ENCODE measurements at regions of chr19 and their contacts with region 1.

Region 1: DNA sequence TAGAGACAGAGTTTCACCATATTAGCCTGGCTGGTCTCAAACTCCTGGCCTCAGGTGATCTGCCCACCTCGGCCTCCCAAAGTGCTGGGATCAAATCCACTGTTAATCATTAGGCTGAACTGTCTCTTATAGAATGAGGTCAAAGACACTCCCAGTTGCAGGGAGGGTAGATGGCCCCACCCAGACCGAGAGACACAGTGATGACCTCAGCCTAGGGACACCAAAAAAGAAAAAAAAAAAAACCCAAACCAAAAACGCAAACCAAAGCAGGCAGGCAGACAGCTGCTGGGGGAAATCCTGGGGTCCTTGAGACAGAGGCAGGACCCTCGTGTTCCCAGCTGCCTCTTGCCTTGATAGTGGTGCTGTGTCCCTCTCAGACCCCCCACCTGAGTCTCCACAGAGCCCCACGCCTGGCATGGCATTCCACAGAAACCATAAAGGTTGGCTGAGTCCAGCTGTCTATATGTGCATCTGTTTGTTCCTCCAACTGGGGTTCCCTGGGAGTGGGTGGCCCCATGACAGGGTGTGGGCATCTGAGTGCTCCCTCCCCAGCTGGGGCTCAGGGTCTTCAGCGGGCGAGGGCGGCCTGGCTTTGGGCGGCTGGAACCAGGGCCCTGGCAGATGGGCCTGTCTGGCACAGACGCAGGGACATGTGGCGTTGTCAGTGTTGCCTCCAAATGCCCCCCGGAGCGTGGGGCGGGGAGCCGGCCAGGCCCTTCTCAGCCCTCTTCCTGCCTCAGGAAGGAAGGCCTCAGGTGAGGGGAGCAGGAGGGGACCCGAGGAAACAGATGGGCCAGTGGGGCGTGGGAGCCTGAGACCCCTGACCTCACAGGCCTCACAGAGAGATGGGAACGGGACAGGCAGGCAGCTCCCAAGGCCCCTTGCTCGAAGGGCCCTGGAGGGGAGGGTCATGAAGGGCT is 5.2 kb downstream of the DAND5 start:
- DNase-seq: no peak
- ATAC-seq: no peak
- H3K4me3 Mint-ChIP-seq: no peak overlapping the region
- H3K27ac Mint-ChIP-seq: no peak overlapping the region
- H3K4me1 Mint-ChIP-seq: peaks cover 8% of the 10 kb centered on the region
- H3K27me3 Mint-ChIP-seq: peaks cover 7% of the 10 kb centered on the region

Region 2: DNA sequence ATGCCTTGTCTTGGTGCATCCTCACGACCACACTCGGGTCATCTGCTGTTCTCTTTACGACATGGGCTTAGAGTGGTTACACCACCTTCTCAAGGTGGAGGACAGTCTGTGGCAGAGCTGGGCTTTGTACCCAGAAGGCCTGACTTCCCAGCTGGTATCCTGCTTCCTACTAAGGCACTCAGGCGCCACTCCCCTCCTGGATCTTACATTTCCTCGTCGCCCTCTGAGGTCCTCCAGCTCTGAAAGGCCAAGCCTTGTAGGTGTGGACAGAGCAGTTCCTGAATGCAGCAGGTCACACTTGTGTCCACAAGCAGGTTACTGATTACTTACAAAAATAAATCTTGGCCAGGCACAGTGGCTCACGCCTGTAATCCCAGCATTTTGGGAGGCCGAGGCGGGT is 67.4 kb before region 1 on chr19:
- CTCF ChIA-PET with region 1: no interaction called
- POLR2A ChIA-PET with region 1: no interaction called
- intact Hi-C with region 1: no loop called
- DNase-seq: no peak
- ATAC-seq: no peak
- H3K4me3 Mint-ChIP-seq: no peak overlapping the region
- H3K27ac Mint-ChIP-seq: no peak overlapping the region
- H3K4me1 Mint-ChIP-seq: no peaks in the 10 kb centered on the region
- H3K27me3 Mint-ChIP-seq: no peaks in the 10 kb centered on the region

Region 3: GRCh38 chr19:13033819-13034611 is 59.5 kb after region 1 on chr19:
- CTCF ChIA-PET with region 1: interaction called, 27 read pairs
- POLR2A ChIA-PET with region 1: no interaction called
- intact Hi-C with region 1: loop called (anchors 1 to 5 kb)
- DNase-seq: peak; percentile 74
- ATAC-seq: peak; percentile 86
- H3K4me3 Mint-ChIP-seq: no peak overlapping the region
- H3K27ac Mint-ChIP-seq: no peak overlapping the region
- H3K4me1 Mint-ChIP-seq: peaks cover 2% of the 10 kb centered on the region
- H3K27me3 Mint-ChIP-seq: no peaks in the 10 kb centered on the region

Region 4: DNA sequence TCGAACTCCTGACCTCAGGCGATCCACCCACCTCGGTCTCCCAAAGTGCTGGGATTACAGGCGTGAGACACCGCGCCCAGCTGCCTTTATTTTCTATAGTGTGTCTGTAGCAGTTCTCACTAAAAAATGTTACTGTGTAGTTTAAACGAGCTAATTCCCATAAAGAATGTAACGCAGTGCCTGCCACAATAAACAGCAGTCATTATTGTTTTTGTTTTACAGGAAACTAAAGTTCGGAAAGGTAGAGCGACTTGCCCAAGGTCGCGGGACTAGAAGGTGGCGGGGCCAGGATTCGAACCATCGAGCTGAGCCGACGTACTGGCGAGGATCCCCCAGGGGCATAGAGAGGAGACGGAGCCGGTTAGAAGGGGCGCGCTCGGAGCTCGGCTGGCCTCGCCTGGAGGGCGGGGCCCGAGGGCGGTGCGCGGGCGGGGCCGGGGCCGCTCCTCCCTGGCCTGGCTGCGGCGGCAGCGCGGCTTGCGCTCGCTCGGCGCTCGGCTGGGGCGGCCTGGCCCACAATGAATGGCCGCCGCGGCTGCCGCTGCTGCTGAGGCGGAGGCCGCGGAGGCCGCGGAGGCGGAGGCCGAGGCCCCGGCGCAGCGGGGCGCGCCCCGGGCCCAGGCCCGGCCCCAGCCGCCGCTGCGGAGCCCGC is 143.3 kb after region 1 on chr19 and contains the start of gene NACC1:
- CTCF ChIA-PET with region 1: no interaction called
- POLR2A ChIA-PET with region 1: no interaction called
- intact Hi-C with region 1: no loop called
- DNase-seq: peak; percentile 95
- ATAC-seq: peak; percentile 85
- H3K4me3 Mint-ChIP-seq: peak within 1 kb of the TSS; percentile 87
- H3K27ac Mint-ChIP-seq: peak within 1 kb of the TSS; percentile 95
- H3K4me1 Mint-ChIP-seq: peaks cover 49% of the 10 kb centered on the region
- H3K27me3 Mint-ChIP-seq: no peaks in the 10 kb centered on the region
- total RNA-seq, gene NACC1: 77.5 to 84.5 TPM

Region 5: DNA sequence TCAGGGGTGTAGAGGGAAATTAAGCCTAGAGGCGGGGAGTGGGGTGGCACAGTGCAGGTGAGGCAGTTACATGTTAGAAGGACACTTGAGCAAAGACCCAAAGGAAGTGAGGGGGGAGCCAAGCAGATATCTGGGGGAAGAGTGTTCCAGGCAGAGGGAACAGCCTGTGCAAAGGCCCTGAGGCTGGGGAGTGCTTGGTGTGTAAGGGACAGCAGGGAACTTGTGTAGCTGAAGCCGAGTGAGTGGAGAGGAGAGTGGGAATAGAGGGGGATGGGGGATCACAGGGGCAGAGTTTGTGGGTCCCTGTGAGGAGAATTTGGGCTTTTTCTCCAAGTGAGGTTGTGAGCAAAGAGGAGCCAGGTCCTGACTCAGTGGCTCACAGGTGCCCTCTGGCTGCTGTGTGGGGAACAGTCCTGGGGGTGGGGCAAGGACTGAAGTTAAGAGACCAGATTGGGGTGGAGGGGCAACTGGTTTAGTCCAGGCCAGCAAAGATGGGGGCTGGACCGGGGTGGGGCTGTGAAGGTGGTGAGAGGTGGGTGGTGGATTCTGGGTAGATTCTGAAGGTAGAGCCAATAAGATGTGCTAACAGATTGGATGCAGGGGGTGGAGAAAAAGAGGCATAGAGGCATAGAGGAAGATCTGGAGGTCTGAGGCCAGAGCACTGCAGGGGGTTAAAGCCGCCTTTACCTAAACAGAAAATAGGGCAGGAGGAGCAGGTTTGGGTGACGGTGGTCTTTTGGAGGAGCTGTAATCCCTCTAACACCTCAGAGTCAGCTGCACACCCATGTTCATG is 456.4 kb after region 1 on chr19:
- CTCF ChIA-PET with region 1: no interaction called
- POLR2A ChIA-PET with region 1: no interaction called
- intact Hi-C with region 1: loop called in 1 of 2 experiments (anchors 5 kb)
- DNase-seq: peak; percentile 76
- ATAC-seq: peak; percentile 71
- H3K4me3 Mint-ChIP-seq: no peak overlapping the region
- H3K27ac Mint-ChIP-seq: no peak overlapping the region
- H3K4me1 Mint-ChIP-seq: no peaks in the 10 kb centered on the region
- H3K27me3 Mint-ChIP-seq: peaks cover 10% of the 10 kb centered on the region

Region 6: DNA sequence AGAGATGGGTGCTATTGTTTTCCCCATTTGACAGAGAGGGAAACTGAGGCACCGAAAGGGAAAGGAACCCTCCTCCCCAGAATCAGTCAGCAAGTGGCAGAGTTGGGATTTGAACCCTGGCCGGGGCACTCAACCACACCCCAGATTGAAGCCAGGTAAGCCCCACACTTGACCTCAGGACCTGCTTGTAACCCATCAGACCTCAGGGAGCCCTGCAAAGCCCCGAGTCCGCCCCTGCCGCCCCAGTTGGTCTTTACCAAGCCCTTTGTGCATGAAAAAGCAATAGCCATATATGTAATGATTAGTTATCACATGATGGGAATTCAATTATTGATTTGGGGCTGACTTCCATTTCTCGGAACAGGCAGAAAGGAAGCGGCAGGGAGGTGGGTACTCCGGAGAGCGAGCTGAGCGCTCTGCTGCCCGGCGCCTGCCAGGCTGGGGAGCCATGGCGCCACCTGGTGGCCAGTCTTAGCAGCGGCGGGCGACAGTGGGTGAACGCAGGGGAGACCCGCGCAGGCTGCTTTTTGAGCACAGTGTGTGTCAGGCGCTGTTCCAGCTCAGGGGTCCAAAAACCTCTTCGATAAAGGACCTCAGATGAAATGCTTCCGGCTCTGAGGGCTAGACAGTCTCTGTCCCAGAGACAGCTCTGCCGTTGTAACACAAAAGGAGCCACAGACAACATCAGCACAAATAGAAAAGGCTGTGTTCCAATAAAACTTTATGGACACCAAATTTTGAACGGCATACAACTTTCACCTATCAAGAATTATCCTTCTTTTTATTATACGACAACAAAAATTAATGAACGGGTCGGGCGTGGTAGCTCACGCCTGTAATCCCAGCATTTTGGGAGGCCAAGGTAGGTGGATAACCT is 614.6 kb after region 1 on chr19:
- CTCF ChIA-PET with region 1: interaction called, 6 read pairs
- POLR2A ChIA-PET with region 1: no interaction called
- intact Hi-C with region 1: loop called in 1 of 2 experiments (anchors 5 kb)
- DNase-seq: peak; percentile 90
- ATAC-seq: peak; percentile 99
- H3K4me3 Mint-ChIP-seq: no peak overlapping the region
- H3K27ac Mint-ChIP-seq: no peak overlapping the region
- H3K4me1 Mint-ChIP-seq: no peaks in the 10 kb centered on the region
- H3K27me3 Mint-ChIP-seq: no peaks in the 10 kb centered on the region